PC-3 (cell line): ENCODE measurements at regions of chr7 and their contacts with region 1.

Region 1: GRCh38 chr7:12107841-12108249 is 103.2 kb upstream of the TMEM106B start:
- DNase-seq: peak; percentile 62
- ATAC-seq: peak; percentile 72
- H3K4me3 ChIP-seq: peak overlapping the region; percentile 28; the same call in 1 of the 2 replicates
- H3K27ac ChIP-seq: no peak overlapping the region
- H3K4me1 ChIP-seq: peaks cover 27% of the 10 kb centered on the region
- H3K27me3 ChIP-seq: no peaks in the 10 kb centered on the region
- CTCF ChIP-seq: no peak

Region 2: DNA sequence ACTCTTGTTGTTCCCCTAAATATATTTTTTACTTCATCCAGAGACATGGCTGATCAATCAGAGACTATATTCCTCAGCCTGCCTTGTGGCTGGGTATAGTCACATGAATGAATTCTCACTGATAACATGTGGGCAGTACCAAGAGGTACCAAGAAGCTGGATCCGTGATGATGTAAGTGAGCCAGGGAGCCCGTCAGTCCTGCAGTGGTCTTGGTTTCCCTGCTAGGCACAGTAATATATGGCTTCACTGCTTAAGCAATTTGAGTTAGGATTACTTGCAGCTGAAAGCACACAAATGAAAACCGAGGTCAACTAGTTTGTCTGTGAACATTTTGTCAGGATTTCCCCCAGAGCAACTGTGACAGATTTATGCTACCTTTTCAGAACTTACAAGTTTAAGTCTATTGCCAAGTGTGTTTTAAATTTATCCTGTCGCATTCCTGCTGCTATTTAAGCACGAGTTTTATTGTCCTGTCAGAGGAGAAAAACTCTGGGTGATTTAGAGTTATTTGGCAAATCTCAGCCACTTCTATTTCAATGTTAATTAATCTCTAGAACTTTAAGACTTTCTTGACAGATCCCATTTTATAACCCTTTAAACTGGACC is 752.3 kb before region 1 on chr7:
- CTCF ChIA-PET with region 1: no interaction called
- POLR2A ChIA-PET with region 1: no interaction called
- intact Hi-C with region 1: no loop called
- DNase-seq: no peak
- ATAC-seq: no peak
- H3K4me3 ChIP-seq: no peak overlapping the region
- H3K27ac ChIP-seq: no peak overlapping the region
- H3K4me1 ChIP-seq: no peaks in the 10 kb centered on the region
- H3K27me3 ChIP-seq: peaks cover 20% of the 10 kb centered on the region; the same call in 1 of the 2 replicates
- CTCF ChIP-seq: no peak

Region 3: DNA sequence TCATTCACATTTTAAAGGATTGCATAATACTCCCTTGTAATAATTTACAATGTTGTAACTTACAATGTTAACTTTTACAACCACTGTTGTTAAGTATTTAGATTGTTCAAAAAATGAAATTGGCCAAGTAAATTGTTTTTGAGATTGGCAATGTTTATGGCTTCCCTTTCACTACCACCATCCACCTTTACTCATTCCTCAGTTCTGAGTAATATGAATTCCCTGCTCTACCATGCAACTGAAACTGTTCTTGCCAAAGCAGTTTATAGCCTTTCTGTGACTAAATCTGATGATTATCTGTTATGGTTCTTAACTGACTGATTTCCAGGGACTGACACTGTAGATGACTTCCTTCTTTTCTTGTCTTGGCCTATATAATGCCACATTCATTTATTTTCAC is 22.8 kb after region 1 on chr7:
- CTCF ChIA-PET with region 1: no interaction called
- POLR2A ChIA-PET with region 1: no interaction called
- intact Hi-C with region 1: loop called (anchors 2 kb)
- DNase-seq: peak; percentile 86
- ATAC-seq: peak; percentile 97
- H3K4me3 ChIP-seq: no peak overlapping the region
- H3K27ac ChIP-seq: peak overlapping the region; percentile 45
- H3K4me1 ChIP-seq: peaks cover 18% of the 10 kb centered on the region
- H3K27me3 ChIP-seq: no peaks in the 10 kb centered on the region
- CTCF ChIP-seq: no peak

Region 4: DNA sequence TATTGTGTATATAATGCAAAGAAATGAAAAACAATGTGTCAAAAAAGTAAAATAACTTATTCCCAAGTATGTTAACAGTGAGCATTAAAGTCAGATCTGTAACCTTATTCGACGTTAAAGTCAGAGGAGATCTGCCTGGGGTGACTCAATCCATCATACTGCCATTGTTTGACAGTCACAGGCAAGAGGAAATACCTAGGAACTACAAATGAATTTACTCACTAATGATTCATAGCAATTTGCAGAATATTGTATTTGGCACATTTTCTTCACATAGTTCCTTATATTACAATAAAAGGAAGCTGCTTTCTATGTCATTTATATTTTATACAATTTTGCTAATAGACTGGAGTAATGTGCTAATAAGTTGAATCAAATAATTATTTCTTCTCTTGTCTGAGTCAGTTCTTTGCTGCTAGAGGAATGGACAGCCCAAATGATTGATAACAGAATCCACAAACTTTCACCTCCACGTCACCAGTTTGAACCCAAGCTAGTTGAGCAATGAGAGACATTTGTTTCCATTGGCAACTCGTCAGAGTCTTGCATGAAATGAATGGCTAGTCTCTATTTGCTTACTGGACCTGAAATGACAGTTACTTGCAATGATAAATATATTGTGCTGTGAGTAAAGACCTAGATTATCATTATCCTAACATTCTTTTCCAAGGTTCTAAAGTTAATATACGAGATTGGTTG is 54.7 kb after region 1 on chr7:
- CTCF ChIA-PET with region 1: no interaction called
- POLR2A ChIA-PET with region 1: no interaction called
- intact Hi-C with region 1: loop called (anchors 2 kb)
- DNase-seq: peak; percentile 90
- ATAC-seq: peak; percentile 88
- H3K4me3 ChIP-seq: no peak overlapping the region
- H3K27ac ChIP-seq: peak overlapping the region; percentile 79
- H3K4me1 ChIP-seq: peaks cover 36% of the 10 kb centered on the region
- H3K27me3 ChIP-seq: no peaks in the 10 kb centered on the region
- CTCF ChIP-seq: no peak

Region 5: DNA sequence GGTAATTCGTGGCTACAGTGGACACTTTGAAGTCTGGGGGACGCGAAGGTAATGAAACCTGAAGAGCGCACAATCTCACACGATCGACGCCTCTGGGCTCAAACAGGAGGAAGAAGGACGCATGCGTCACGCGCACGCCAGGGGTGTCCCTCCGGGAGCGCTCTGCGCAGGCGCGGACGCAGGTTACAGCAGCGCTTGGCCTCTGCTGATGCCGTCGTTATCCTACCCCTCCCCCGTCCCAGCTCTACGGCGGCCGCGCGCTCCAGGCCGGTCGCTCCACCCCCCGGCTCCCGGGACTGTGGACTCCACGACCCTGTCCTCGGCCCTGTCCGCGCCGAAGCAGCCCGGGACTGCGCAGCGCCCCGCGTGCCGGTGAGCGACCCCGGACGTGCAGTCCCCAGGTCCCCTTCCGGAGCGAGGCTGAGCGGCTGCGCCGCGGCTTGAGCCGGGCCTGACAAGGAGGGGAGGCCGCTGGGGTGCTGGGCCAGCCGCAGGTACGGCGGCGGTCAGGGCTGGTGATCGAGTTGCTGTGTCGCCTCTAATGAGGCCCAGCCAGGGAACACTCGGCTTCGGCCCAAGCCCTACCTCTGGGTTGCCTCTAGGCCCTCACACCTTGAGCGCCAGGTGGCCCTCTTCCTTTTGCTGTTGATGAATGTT is 103.3 kb after region 1 on chr7 and contains the start of gene TMEM106B:
- CTCF ChIA-PET with region 1: no interaction called
- POLR2A ChIA-PET with region 1: no interaction called
- intact Hi-C with region 1: loop called (anchors 10 kb)
- DNase-seq: peak; percentile 97
- ATAC-seq: peak; percentile 87
- H3K4me3 ChIP-seq: peak within 1 kb of the TSS; percentile 80
- H3K27ac ChIP-seq: peak within 1 kb of the TSS; percentile 70
- H3K4me1 ChIP-seq: peaks cover 36% of the 10 kb centered on the region
- H3K27me3 ChIP-seq: no peaks in the 10 kb centered on the region
- CTCF ChIP-seq: peak; percentile 39; the same call in 1 of the 2 replicates
- total RNA-seq, gene TMEM106B: 32.5 and 41.6 TPM in 2 replicates